Activated CD4-positive, alpha-beta memory T cell treated with anti-CD3 and anti-CD28 coated beads for 36 hours (primary cell): ENCODE measurements at regions of chr10 and their contacts with region 1.

Region 1: GRCh38 chr10:110210674-110211464 is 3.5 kb downstream of the MXI1 start:
- DNase-seq: peak; percentile 96
- H3K4me3 Mint-ChIP-seq: peak overlapping the region; percentile 96
- H3K27ac Mint-ChIP-seq: peak overlapping the region; percentile 91
- H3K4me1 Mint-ChIP-seq: peaks cover 54% of the 10 kb centered on the region
- H3K27me3 Mint-ChIP-seq: peaks cover 1% of the 10 kb centered on the region

Region 2: DNA sequence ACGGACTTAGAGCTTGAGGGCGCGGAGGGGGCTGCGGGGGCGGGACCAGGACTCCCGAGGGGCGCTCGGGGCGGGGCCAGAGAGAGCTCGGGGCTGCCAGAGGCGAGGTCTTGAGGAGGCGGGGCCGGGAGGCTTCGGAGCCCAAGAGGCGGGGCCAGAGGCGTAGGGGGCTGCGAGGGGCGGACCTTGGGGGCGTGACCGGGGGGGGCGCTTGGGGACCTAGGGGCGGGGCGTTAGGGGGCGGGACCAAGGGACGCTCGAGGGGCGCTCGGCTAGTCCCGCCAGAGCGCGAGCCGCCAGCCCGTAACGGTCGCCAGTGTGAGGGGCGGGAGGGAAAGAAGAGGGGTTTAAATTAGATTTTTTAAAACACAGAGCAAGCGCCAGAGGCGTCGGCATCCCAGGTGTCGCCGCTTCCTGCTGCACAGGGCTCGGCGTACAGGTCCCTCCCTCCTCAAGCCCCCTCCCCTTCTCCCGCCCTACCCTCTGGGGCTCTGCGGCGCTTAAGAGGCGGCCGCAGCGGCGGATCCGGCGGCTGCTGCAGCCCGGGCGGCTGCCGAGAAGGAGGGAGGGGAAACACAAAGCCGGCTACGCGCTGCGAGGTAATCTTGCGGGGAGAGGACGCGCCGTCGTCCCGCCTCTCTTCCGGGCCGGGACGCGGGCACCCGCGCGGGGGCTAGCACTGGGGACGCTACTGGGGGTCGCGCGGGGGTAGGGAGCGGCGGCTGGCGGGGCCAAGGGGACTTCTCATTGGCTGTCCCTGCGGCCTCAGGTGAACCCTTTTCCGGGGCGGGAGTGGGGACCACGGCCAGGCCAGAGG is 203.0 kb before region 1 on chr10 and contains the start of gene ADD3:
- CTCF ChIA-PET with region 1: no interaction called
- POLR2A ChIA-PET with region 1: no interaction called
- intact Hi-C with region 1: loop called (anchors 1 kb)
- DNase-seq: peak; percentile 92
- H3K4me3 Mint-ChIP-seq: no peak within 1 kb of the TSS
- H3K27ac Mint-ChIP-seq: peak within 1 kb of the TSS; percentile 81
- H3K4me1 Mint-ChIP-seq: peaks cover 40% of the 10 kb centered on the region
- H3K27me3 Mint-ChIP-seq: no peaks in the 10 kb centered on the region
- total RNA-seq, gene ADD3: 92.3 to 93.3 TPM

Region 3: DNA sequence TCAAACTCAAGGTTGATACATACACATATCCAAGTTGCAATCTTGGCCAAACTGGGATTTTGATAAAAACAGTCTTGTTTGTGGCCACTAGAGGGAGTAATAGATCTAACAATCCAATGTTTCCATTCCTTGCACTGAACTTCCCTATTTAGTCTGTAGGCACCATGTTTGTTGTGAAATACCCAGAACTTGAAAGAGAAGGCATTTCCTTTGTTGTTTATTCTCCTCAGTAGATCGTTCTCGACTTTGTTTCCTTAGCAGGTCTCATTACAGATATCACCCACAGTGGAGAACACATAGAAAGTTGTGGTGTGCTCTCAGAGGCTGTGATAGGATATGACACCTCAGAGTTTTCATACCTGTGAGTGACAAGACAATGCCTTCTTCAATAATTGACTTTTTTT is 73.7 kb before region 1 on chr10:
- CTCF ChIA-PET with region 1: interaction called, 25 read pairs
- POLR2A ChIA-PET with region 1: interaction called, 4 read pairs
- intact Hi-C with region 1: loop called (anchors 1 kb)
- DNase-seq: no peak
- H3K4me3 Mint-ChIP-seq: no peak overlapping the region
- H3K27ac Mint-ChIP-seq: peak overlapping the region; percentile 6
- H3K4me1 Mint-ChIP-seq: peaks cover 37% of the 10 kb centered on the region
- H3K27me3 Mint-ChIP-seq: no peaks in the 10 kb centered on the region

Region 4: DNA sequence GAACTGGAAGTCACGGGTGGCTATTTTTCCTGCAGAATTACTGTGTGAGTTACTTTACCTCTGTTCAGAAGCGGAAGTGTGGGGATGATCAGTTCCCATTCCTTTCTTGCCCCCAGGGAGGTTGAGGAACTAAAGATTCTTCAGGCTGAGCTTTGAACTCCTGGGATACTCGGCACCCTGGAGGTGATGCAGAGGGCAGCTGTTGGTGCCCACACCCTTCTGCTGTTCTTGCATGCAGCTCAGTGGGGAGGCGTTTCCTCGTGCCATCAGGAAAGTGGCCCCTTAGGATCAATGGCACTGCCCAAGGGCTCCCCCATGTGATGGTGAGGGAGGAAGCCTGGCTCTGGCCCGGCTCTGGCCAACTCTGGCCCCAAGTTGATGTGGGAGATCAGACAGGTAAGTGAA is 48.1 kb before region 1 on chr10:
- CTCF ChIA-PET with region 1: interaction called, 4 read pairs
- POLR2A ChIA-PET with region 1: interaction called, 5 read pairs
- intact Hi-C with region 1: loop called (anchors 1 kb)
- DNase-seq: no peak
- H3K4me3 Mint-ChIP-seq: no peak overlapping the region
- H3K27ac Mint-ChIP-seq: no peak overlapping the region
- H3K4me1 Mint-ChIP-seq: peaks cover 16% of the 10 kb centered on the region
- H3K27me3 Mint-ChIP-seq: peaks cover 63% of the 10 kb centered on the region

Region 5: GRCh38 chr10:110273474-110273873 is 62.6 kb after region 1 on chr10:
- CTCF ChIA-PET with region 1: interaction called, 142 read pairs
- POLR2A ChIA-PET with region 1: no interaction called
- intact Hi-C with region 1: no loop called
- DNase-seq: peak; percentile 60
- H3K4me3 Mint-ChIP-seq: no peak overlapping the region
- H3K27ac Mint-ChIP-seq: no peak overlapping the region
- H3K4me1 Mint-ChIP-seq: peaks cover 50% of the 10 kb centered on the region
- H3K27me3 Mint-ChIP-seq: no peaks in the 10 kb centered on the region

Region 6: GRCh38 chr10:110497438-110498086 is 286.7 kb after region 1 on chr10 and contains the start of gene DUSP5:
- CTCF ChIA-PET with region 1: no interaction called
- POLR2A ChIA-PET with region 1: no interaction called
- intact Hi-C with region 1: loop called (anchors 1 kb)
- DNase-seq: peak; percentile 97
- H3K4me3 Mint-ChIP-seq: peak within 1 kb of the TSS; percentile 96
- H3K27ac Mint-ChIP-seq: peak within 1 kb of the TSS; percentile 97
- H3K4me1 Mint-ChIP-seq: peaks cover 48% of the 10 kb centered on the region
- H3K27me3 Mint-ChIP-seq: no peaks in the 10 kb centered on the region
- total RNA-seq, gene DUSP5: 171 to 176 TPM

Region 7: GRCh38 chr10:110815354-110816004 is 604.6 kb after region 1 on chr10:
- CTCF ChIA-PET with region 1: no interaction called
- POLR2A ChIA-PET with region 1: no interaction called
- intact Hi-C with region 1: no loop called
- DNase-seq: peak; percentile 18
- H3K4me3 Mint-ChIP-seq: no peak overlapping the region
- H3K27ac Mint-ChIP-seq: no peak overlapping the region
- H3K4me1 Mint-ChIP-seq: peaks cover 16% of the 10 kb centered on the region
- H3K27me3 Mint-ChIP-seq: no peaks in the 10 kb centered on the region